Head of caudate nucleus (tissue), 42 donors: ENCODE measurements at regions of chr16 and their contacts with region 1.

Region 1: GRCh38 chr16:85610508-85611332 is 2.4 kb upstream of the GSE1 start:
- DNase-seq: peak; percentile 73 to 95 (median 88)

Region 2: DNA sequence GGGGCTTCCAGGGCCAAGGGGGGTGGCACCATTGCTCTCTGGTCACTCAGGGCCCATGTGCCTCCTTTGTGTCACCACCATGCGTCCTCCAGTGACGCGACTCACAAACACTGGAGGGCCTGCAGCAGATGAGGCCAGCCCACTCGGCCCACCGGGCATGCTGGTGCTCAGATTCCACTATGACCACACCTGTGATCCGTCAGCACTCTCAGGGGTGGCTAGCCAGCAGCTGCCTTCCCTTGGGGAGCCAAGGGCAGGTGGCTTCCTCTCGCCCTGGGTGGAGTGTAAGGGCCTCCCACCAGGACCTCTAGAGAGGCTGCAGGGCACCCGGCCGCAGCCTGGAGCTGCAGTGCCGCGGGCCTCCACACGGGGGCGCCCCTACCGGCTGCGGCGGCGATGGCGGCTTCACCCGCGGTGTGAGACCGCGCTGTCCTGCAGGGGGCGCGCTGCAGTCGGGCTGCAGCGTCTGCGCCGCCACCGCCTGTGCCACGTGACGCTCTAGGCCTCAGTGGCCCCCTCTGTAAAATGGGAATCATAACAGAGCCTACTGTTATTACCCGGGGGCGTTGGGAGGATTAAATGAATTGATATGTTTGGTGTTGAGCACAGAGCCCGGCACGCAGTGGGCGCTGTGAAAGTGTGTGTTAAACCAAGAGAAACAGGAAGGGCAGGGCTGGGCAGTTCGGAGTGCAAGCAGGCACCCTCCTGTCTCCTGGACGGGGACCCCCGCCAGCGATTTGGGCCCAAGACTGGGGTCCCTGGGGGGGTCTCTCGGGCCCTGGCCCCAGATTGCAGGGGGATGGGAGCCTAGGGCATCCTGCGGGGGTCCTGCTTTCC is 190.0 kb before region 1 on chr16:
- intact Hi-C with region 1: loop called (anchors 10 kb)
- DNase-seq: peak in 22 of 42 donors; percentile 9 to 69 (median 36)